CD4-positive, alpha-beta T cell (primary cell): ENCODE measurements at regions of chr5 and their contacts with region 1.

Region 1: GRCh38 chr5:170633235-170634081 is 129.6 kb downstream of the KCNIP1 start:
- DNase-seq: peak in 2 of 14 experiments; percentile 29 to 39
- ATAC-seq: peak; percentile 51
- H3K4me3 ChIP-seq: peak overlapping the region; percentile 39
- H3K4me3 Mint-ChIP-seq: peak overlapping the region; percentile 77
- H3K27ac ChIP-seq: no peak overlapping the region
- H3K27ac Mint-ChIP-seq: peak overlapping the region; percentile 38
- H3K4me1 ChIP-seq: peaks cover 18% of the 10 kb centered on the region
- H3K4me1 Mint-ChIP-seq: peaks cover 20% of the 10 kb centered on the region
- H3K27me3 ChIP-seq: peaks cover 0 to 4% of the 10 kb centered on the region in 2 experiments
- H3K27me3 Mint-ChIP-seq: peaks cover 11% of the 10 kb centered on the region
- CTCF ChIP-seq: peak; percentile 64

Region 2: DNA sequence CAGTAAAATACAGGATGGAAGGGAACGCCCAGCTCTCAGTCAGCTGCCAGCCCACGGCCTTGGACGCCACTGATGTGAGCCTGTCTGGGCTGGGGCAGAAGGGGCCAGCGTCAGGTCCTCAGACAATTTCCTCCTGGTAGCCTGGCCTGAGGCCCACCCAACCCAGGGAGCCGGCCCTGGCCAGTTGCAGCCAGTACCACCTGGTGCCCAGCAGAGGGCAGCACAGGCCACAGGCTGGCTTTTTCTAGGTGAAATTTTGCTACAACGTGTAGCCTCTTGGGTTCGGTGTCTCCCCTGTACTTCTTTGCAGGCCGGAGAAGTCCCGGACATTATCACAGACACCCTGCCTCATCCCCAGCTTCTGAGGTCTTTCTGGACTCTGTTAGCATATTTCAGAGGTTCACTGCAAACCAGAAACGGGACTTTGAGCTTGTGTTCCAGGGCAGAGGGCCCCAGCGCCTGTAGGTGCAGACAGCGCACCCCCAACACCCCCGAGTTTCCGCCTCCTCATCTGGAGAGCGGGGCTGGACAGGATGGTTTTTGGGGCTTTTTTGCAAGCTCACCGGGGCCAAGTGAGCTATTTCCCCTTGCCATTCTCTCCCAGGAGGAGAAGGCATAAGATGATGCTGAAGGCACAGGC is 198.4 kb before region 1 on chr5:
- CTCF ChIA-PET with region 1: interaction called, 3 read pairs
- POLR2A ChIA-PET with region 1: no interaction called
- intact Hi-C with region 1: loop called (anchors 1 to 2 kb)
- DNase-seq: peak in 13 of 14 experiments; percentile 35 to 75 (median 43)
- ATAC-seq: peak; percentile 63
- H3K4me3 ChIP-seq: no peak overlapping the region
- H3K4me3 Mint-ChIP-seq: no peak overlapping the region
- H3K27ac ChIP-seq: no peak overlapping the region
- H3K27ac Mint-ChIP-seq: no peak overlapping the region
- H3K4me1 ChIP-seq: peaks cover 4% of the 10 kb centered on the region
- H3K4me1 Mint-ChIP-seq: no peaks in the 10 kb centered on the region
- H3K27me3 ChIP-seq: no peaks in the 10 kb centered on the region
- H3K27me3 Mint-ChIP-seq: no peaks in the 10 kb centered on the region
- CTCF ChIP-seq: peak; percentile 82